ENCODE measurements at regions of chr7 and their contacts with region 1.

Region 1: DNA sequence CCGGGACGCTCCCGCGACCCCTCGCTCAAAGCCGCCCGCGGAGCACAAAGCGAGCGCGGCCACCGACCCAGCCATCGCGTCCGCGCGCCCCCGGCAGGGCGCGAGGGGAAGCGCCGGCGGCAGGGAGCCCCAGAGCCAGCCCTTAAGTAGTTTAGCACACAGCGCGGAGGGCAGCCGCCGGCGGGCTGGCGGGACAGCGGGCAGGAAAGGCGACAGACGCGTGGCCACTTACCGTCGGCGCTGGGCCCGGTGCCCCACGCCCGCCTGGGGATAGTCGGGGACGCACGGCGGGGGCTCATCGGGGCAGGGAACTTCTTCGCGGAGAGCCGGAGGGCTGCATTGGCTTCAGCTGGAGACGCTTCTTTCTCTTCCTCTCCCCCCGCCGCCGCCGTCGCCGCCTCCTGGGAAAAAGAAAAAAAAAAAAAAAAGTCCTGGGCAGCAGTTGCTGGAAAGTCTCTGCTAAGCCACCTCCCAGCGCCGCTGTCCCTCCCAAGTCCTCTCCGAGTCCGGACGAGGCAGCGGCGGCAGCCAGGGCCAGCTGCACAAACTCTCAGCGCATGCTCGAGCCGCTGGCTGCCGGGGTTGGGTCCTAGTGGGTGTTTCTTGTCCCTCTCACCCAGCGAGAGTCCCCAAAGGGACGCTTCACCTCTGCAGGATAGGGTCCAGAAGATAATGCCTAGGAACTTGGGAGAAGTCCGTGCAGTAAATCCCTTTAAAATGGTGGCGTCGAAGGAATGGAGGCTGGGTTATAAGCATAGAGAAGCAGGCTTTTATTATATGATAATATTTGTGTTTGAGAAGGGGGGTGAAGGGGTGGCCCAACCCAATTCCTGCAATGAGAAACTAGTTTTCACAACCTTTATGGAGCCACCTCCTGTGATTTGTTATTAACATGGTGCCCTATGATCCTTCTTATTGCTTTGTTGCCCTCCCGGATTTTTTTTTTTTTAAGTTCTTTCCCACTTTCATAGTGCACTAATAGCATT is at the start of gene TSPAN12:
- DNase-seq: peak; percentile 81 to 88 (median 86)
- ATAC-seq: peak; percentile 86
- H3K4me3 ChIP-seq: peak within 1 kb of the TSS; percentile 49
- H3K4me1 ChIP-seq: peaks cover 9% of the 10 kb centered on the region
- CTCF ChIP-seq: peak; percentile 67
- total RNA-seq, gene TSPAN12: 23.1 to 43.4 (median 35.6) TPM

Region 2: DNA sequence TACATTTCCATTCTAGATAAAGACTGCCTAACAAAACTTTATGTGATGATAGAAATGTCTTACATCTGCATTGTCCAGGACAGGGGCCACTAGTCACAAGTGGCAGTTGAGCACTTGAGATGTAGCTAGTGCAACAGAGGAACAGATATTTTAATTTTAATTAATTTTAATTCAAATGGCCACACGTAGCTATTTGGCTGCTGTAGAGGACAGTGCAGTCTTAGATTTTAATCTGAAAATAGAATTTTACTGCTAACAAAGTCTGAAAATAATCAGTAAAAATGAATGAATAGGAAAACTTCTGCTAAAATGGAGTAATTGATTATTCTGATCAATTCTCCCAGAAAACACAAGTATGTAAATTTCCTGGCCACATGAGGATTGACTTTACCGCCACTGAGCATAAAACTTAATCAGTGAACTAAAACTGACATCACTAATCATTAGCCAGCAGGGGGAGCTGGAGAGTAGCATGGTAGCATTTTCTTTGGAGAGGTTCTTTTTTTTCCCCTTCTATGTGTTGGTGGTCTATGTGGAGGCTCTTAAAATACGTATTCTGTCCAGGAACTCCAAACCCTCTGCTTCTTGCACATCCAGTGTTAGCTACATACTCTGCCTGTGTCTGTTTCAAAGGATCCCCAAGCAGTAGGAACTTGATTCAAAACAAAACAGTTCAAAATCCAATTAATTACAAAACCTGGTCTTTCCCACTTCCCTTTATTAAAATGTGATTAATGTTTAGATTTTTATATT is 52.1 kb before region 1 on chr7:
- intact Hi-C with region 1: no loop called
- DNase-seq: peak in 1 of 3 donors; percentile 78
- ATAC-seq: peak; percentile 69
- H3K4me3 ChIP-seq: no peak overlapping the region
- H3K4me1 ChIP-seq: no peaks in the 10 kb centered on the region
- CTCF ChIP-seq: peak; percentile 67

Region 3: DNA sequence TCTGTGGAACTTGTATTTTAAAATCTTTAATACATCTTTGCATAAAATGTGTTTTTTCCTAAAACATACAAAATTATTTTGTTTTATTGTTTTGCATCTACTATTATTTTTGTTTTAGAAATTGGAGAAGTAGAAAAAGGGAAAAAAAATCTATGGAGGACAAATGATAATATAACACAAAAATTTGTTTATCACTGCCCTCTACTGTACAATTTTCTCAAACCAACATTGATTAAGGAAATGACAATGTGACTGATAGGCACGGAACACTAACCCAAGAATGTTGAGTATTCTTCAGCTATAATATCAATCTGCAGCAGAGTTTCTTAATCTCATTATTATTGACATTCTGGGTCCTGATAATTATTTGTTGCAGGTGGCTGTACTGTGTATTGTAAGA is 83.2 kb after region 1 on chr7:
- intact Hi-C with region 1: loop called in 1 of 2 experiments (anchors 5 kb)
- DNase-seq: no peak
- ATAC-seq: peak; percentile 50
- H3K4me3 ChIP-seq: no peak overlapping the region
- H3K4me1 ChIP-seq: peaks cover 10% of the 10 kb centered on the region
- CTCF ChIP-seq: no peak

Measured in mucosa of descending colon (tissue), 3 donors.